Heart left ventricle (tissue), 16 donors: ENCODE measurements at regions of chr3 and their contacts with region 1.

Region 1: DNA sequence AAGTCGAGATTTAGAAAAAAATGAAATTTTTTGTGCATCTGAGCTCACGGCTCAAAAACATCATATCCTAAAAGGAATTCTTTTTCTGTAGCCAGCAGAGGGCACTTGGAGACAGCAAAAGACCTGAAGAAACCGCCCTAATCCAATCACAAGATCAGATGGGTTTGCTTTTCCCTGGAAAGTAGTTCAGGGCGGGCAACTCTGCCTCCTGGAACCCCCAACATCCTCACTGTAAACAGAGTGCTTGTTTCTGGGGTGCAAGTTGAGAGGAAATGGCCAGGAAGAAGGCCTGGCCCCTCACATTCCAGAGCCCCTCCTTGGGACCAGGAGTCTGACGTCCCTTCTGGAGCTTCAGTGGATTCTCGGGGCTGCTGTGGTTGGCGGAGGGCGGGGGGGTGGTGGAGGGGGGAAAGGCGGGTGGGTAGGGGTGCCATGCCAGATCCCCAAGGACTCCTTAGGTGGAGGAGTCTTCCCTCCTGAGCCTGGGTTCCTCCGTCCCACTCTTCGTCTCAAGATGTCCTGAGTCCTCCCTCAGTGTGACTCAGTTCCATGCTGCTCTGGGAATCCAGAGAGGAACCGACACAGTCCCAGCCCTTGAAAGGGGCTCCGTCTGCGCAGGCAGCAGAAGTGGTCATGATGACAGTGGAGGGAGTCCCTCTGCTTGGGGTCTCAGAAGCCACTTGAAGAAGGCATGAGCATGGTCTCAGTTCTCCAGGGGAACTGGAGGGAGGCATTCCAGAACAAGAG is 35.9 kb downstream of the CCK start:
- DNase-seq: no peak
- ATAC-seq: peak in 2 of 4 donors; percentile 12 to 42
- H3K4me3 ChIP-seq: peak overlapping the region in 1 of 12 donors; percentile 29
- H3K27ac ChIP-seq: no peak overlapping the region
- H3K4me1 ChIP-seq: peaks cover 0 to 8% (median 0%) of the 10 kb centered on the region in 12 donors
- H3K27me3 ChIP-seq: peaks cover 0 to 4% (median 0%) of the 10 kb centered on the region in 9 donors
- CTCF ChIP-seq: peak in 10 of 12 donors; percentile 28 to 66 (median 54)
- POLR2A ChIP-seq: no peak

Region 2: DNA sequence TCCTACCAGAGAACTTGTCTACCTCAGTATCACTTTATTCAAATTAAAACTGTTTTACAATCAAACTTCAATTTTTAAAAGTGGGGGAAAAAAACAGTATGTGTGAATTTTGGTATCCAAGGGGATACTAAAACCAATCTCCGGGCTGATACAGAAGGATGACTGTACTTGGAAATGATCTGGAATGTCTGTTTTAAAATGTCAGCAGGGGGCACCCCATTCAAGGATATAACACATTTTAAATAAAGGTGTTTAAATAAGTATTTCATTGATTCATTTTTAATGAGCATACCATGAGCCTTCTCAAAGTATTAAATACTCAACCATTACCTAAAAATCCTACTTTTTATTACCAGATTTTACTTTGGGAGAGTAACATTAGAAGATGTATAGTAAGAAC is 336.1 kb before region 1 on chr3:
- intact Hi-C with region 1: loop called in 3 of 10 experiments (anchors 10 kb)
- DNase-seq: peak in 1 of 5 donors; percentile 12
- ATAC-seq: no peak
- H3K4me3 ChIP-seq: no peak overlapping the region
- H3K27ac ChIP-seq: no peak overlapping the region
- H3K4me1 ChIP-seq: peaks cover 0 to 7% (median 0%) of the 10 kb centered on the region in 12 donors
- H3K27me3 ChIP-seq: no peaks in the 10 kb centered on the region
- CTCF ChIP-seq: peak; percentile 31 to 71 (median 63)
- POLR2A ChIP-seq: no peak